ENCODE measurements at regions of chr14 and their contacts with region 1.

Region 1: GRCh38 chr14:22852940-22853767 is 16.8 kb downstream of the MMP14 start:
- H3K4me3 ChIP-seq: peak overlapping the region; percentile 50
- H3K27ac ChIP-seq: no peak overlapping the region
- H3K4me1 ChIP-seq: no peaks in the 10 kb centered on the region
- CTCF ChIP-seq: peak; percentile 91

Region 2: DNA sequence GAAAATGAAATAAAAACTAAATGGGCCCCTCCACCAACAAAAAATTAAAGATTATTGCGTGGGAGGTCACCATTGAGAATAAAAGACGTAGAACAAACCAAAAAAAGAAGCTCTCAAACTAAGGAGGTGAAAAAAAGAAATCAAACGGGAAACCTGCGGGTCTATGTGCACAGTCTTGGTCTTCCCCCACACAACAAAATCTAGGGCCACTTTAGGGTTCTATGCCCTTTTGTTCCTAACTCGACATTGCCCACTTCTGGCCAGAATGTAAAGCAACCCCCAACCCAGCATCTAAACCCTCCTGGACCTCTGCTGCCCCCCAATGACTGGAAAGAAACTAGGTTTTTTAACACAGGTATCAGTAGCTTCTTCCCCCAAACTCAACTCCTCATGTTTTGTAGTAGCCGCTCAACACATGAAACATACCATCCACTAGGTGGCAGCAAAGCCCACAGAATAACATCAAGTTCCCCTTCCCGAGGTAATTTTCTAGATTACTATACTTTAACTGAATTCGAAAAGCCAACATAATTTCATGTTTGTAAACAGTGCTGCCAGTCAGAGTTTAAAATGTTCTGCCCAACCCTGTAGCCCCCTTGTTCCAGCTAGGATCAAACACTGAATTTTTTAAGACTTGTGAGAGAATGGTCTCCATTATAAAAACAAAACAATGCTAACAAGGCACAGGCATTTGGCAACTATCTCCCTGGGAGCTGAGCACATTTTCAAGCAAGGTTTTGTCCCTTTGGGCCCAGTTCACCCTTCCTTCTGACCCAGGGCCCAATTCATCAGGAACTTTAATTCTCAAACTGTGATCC is 282.8 kb before region 1 on chr14:
- CTCF ChIA-PET with region 1: interaction called, 82 read pairs
- POLR2A ChIA-PET with region 1: no interaction called
- H3K4me3 ChIP-seq: no peak overlapping the region
- H3K27ac ChIP-seq: no peak overlapping the region
- H3K4me1 ChIP-seq: peaks cover 2% of the 10 kb centered on the region; the same call in 1 of the 2 replicates
- CTCF ChIP-seq: peak; percentile 83

Region 3: DNA sequence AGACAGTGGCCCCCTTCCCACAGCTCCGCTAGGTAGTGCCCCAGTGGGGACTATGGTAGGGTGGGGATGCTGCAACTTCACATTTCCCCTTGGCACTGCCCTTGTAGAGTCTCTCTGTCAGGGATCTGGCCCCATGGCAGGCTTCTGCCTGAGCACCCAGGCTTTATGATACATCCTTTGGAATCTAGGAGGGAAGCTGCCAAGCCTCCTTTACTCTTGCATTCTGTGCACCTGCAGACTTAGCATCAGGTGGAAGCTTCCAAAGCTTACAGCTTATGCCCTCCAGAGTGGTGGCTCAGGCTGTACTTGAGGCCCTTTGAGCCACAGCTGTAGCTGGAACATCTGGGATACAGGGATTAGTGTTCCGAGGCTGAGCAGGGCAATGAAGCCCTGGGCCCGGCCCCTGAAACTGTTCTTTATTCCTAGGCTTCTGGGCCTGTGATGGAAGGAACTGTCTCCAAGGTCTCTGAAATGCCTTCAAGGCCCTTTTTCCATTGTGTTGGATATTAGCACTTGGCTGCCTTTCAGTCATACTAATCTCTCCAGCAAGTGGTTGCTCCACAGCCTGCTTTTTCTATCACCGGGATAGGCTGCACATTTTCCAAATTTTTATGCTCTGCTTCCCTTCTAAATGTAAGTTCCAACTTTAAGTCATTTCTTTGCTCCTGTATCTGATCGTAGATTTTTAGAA is 186.8 kb before region 1 on chr14:
- CTCF ChIA-PET with region 1: no interaction called
- POLR2A ChIA-PET with region 1: no interaction called
- H3K4me3 ChIP-seq: no peak overlapping the region
- H3K27ac ChIP-seq: no peak overlapping the region
- H3K4me1 ChIP-seq: peaks cover 7% of the 10 kb centered on the region
- CTCF ChIP-seq: no peak

Region 4: GRCh38 chr14:22766456-22767322 is 86.5 kb before region 1 on chr14 and contains the start of gene OXA1L:
- CTCF ChIA-PET with region 1: interaction called, 12 read pairs
- POLR2A ChIA-PET with region 1: no interaction called
- H3K4me3 ChIP-seq: peak within 1 kb of the TSS; percentile 94
- H3K27ac ChIP-seq: peak within 1 kb of the TSS; percentile 58
- H3K4me1 ChIP-seq: no peaks in the 10 kb centered on the region; the same call in 1 of the 2 replicates
- CTCF ChIP-seq: no peak

Region 5: DNA sequence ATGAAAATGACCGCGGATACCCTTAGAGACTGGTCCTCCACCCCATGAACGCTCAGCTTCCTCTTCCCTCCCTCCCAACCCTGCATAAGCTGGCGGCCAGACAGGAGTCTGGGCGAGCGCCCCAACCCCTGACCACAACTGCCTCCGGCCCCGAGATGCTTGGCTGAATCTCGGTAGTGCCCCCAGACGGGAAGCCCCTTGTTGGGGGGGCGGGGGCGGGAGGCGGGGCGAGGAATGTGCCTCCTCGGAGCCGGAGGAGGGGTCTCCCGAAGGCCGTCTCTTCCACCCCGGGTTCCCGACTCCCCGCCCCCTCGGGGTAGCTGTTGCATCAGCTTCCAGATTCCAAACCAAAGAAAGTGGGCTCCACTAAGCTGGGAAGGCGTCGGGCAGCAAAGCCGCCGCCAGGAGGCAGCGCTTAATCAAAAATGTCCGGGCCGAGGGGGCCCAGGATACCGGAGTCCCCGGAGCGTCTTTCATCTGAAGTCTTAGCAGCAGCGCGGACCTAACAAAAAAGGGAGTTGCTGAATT is 30.5 kb before region 1 on chr14:
- CTCF ChIA-PET with region 1: interaction called, 115 read pairs
- POLR2A ChIA-PET with region 1: interaction called, 6 read pairs
- H3K4me3 ChIP-seq: peak overlapping the region; percentile 15
- H3K27ac ChIP-seq: no peak overlapping the region
- H3K4me1 ChIP-seq: peaks cover 2% of the 10 kb centered on the region; the same call in 1 of the 2 replicates
- CTCF ChIP-seq: peak; percentile 68

Region 6: DNA sequence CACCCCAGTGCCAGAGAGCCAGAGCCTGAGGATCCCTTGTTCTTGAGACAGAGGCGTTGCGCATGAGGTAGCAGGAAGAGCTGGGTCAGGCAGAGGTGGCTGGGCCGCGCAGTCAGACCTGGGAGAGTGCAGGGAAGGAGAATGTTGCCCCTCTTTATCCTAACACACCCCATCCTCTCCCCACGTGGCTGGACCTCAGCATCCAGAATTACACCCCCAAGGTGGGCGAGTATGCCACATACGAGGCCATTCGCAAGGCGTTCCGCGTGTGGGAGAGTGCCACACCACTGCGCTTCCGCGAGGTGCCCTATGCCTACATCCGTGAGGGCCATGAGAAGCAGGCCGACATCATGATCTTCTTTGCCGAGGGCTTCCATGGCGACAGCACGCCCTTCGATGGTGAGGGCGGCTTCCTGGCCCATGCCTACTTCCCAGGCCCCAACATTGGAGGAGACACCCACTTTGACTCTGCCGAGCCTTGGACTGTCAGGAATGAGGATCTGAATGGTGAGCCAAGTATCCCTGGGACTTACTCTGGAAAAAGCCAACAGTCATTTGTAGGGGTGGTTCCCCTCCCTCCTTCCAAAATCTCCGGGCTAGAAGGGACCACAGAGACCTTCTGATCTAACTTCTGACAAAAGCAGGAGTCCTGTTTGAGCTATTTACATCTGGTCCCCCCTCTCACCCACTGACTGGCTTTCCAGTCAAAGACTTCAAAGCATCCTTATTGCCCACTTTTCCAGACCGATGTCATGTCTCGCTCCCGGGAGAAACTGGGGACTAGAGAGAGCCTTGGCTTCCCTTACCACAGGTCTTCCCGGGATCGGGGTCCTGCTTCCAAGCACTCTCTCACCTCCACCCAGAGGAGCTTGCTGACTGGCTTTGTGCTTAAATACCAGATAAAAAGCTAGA is 10.7 kb before region 1 on chr14:
- CTCF ChIA-PET with region 1: interaction called, 13 read pairs
- POLR2A ChIA-PET with region 1: interaction called, 5 read pairs
- H3K4me3 ChIP-seq: no peak overlapping the region
- H3K27ac ChIP-seq: no peak overlapping the region
- H3K4me1 ChIP-seq: no peaks in the 10 kb centered on the region
- CTCF ChIP-seq: no peak

Region 7: DNA sequence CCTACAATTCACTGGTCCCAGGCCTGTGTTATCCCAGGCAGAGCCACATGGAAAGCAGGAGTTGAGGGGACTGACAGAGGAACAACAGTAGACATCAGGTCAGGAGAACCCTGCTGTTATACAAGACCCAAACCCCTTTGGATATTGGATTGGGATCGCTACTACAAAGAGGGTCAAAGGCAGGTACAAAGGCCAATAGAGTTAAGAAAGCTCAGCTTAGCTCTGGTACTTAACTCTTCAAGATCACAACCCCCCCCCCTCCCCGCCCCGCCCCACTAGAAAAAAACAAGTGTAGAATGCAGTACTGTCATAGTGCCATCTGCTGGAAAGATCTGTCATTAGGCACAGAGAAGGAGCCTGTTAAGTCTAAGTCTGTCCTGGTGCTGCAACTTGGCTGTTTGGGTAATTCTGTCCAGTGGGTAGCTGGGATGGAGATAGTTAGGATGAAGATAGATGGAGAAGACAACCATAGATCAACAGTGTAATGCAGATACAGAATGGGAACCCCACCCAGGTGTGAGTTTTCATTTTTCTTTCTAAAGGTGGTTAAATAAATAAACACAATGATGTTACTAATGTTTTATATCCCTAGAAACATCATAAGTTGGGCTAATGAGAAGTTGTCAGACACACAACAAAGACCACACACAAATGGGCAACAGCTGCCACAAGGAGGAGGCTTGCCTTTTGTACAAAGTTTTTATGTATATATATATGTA is 47.1 kb after region 1 on chr14:
- CTCF ChIA-PET with region 1: interaction called, 11 read pairs
- POLR2A ChIA-PET with region 1: no interaction called
- H3K4me3 ChIP-seq: no peak overlapping the region
- H3K27ac ChIP-seq: no peak overlapping the region
- H3K4me1 ChIP-seq: no peaks in the 10 kb centered on the region
- CTCF ChIP-seq: peak; percentile 45; the same call in 1 of the 2 replicates

Region 8: GRCh38 chr14:22923749-22924148 is 70.6 kb after region 1 on chr14:
- CTCF ChIA-PET with region 1: no interaction called
- POLR2A ChIA-PET with region 1: no interaction called
- H3K4me3 ChIP-seq: no peak overlapping the region
- H3K27ac ChIP-seq: no peak overlapping the region
- H3K4me1 ChIP-seq: peaks cover 5% of the 10 kb centered on the region; the same call in 1 of the 2 replicates
- CTCF ChIP-seq: no peak

Measured in HEK293 (cell line).